CD8-positive, alpha-beta T cell (primary cell): ENCODE measurements at regions of chr7 and their contacts with region 1.

Region 1: GRCh38 chr7:151341357-151342101 is at the start of gene NUB1:
- DNase-seq: peak; percentile 83 to 98 (median 92)
- ATAC-seq: peak; percentile 91
- H3K4me3 ChIP-seq: peak within 1 kb of the TSS; percentile 68 to 82
- H3K4me3 Mint-ChIP-seq: peak within 1 kb of the TSS; percentile 88
- H3K27ac ChIP-seq: peak within 1 kb of the TSS; percentile 72 to 75
- H3K27ac Mint-ChIP-seq: peak within 1 kb of the TSS; percentile 92
- H3K4me1 ChIP-seq: peaks cover 23% of the 10 kb centered on the region
- H3K4me1 Mint-ChIP-seq: peaks cover 35% of the 10 kb centered on the region
- H3K27me3 ChIP-seq: no peaks in the 10 kb centered on the region
- H3K27me3 Mint-ChIP-seq: no peaks in the 10 kb centered on the region
- CTCF ChIP-seq: no peak
- total RNA-seq, gene NUB1: 78.4 to 81.2 TPM

Region 2: DNA sequence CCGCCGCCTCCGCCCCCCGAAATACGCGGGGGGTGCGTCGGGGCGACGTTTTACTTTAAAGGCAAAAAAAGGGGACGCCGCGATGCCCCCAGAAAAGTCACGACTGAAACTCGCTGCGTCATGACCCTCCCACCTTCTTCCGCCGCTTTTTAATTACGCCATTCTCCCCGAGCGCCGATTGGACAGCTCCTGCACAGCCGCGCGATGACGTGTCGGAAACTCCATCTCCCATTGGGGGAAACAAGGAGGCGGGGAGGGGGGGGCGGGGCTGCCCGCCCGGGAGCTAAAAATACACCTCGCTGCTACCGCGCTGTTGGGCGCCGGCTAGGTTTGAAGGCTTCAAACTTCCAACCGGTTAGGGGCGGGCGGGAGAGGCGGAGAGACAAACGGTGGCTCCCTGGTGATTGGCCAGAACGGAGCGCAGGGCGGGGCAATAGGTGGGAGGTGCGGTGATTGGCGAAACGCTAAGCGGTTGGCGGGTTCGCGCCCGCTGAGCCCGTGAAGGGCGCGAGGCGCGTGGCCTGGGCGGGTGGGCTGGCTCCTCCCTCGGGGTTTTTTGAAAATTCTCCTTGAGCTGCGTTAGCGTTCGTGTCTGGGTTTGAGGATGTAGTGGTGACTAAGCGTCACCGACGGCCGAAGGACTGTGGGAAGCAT is 178.4 kb after region 1 on chr7 and contains the start of gene RHEB:
- CTCF ChIA-PET with region 1: no interaction called
- POLR2A ChIA-PET with region 1: interaction called, 4 read pairs
- intact Hi-C with region 1: loop called in 1 of 2 experiments (anchors 2 kb)
- DNase-seq: peak; percentile 94 to 99 (median 98)
- ATAC-seq: peak; percentile 82
- H3K4me3 ChIP-seq: peak within 1 kb of the TSS; percentile 65 to 73
- H3K4me3 Mint-ChIP-seq: peak within 1 kb of the TSS; percentile 84
- H3K27ac ChIP-seq: peak within 1 kb of the TSS; percentile 85 to 86
- H3K27ac Mint-ChIP-seq: peak within 1 kb of the TSS; percentile 94
- H3K4me1 ChIP-seq: peaks cover 34% of the 10 kb centered on the region
- H3K4me1 Mint-ChIP-seq: peaks cover 41% of the 10 kb centered on the region
- H3K27me3 ChIP-seq: no peaks in the 10 kb centered on the region
- H3K27me3 Mint-ChIP-seq: no peaks in the 10 kb centered on the region
- CTCF ChIP-seq: no peak
- total RNA-seq, gene RHEB: 57.2 to 61.0 TPM